ENCODE measurements at regions of chr4 and their contacts with region 1.

Region 1: GRCh38 chr4:153083447-153083947 is 120.7 kb upstream of the TRIM2 start:
- DNase-seq: peak; percentile 80
- H3K4me3 ChIP-seq: no peak overlapping the region
- H3K27ac ChIP-seq: no peak overlapping the region
- H3K4me1 ChIP-seq: peaks cover 4% of the 10 kb centered on the region
- CTCF ChIP-seq: peak; percentile 83

Region 2: DNA sequence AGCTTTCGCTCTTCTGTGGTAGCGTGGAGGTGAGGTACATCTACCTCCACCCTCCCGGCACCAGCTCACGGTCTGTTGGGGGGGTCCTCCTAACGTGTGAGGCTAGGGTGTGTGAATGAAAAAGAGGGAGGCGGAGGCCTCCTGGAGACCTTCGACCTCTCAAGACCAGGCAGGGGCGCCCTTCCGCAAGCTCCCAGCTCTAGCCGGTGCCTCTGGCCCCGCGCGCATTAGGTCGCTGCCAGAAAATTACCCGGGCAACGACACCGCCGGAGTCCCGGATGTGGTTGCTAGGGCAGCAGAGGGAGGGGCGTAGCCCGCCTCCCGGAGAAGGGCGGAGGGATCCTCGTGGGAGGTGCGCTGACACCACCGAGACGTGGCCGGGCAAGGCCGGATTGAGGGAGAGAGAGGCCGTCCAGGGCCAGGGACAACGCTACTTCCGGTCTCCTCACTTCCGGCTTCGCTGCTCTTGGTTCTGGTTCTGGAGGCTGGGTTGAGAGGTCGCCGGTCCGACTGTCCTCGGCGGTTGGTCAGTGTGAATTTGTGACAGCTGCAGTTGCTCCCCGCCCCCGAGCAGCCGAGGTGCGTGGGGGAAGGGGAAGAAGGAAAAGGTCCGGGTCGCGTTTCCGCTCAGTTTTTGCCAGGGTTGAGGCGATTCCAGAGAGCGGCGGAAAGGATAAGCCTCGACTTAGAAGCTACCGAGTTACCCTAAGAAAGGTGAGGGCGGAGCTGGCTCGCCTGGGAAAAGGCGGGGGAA is 303.8 kb before region 1 on chr4 and contains the starts of genes ARFIP1 and TIGD4:
- CTCF ChIA-PET with region 1: interaction called, 3 read pairs
- POLR2A ChIA-PET with region 1: no interaction called
- intact Hi-C with region 1: loop called (anchors 10 kb)
- DNase-seq: peak; percentile 96
- H3K4me3 ChIP-seq: peak within 1 kb of the TSS; percentile 79
- H3K27ac ChIP-seq: peak within 1 kb of the TSS; percentile 31
- H3K4me1 ChIP-seq: peaks cover 44% of the 10 kb centered on the region
- CTCF ChIP-seq: peak; percentile 73
- total RNA-seq, gene ARFIP1: 24.8 and 29.3 TPM in 2 replicates
- total RNA-seq, gene TIGD4: 1.1 and 1.5 TPM in 2 replicates

Region 3: DNA sequence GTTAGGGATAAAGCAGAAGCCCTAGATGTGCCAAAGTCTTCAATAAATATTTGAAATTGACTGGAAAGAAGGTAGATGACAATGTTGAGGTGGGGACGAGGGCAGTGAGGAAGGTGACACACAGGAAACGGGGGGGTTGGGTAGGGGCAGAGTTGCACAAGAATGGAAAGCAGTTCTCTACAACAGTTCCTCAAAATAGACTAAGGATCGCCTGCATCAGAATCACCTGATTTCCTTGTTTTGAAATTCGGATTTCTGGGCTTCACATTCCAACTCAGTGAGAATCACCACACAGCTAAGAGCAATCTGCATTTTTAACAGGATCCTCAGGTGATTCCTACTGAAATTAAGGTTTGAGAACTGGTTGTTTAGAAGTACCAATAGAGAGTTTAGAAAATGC is 233.1 kb before region 1 on chr4:
- CTCF ChIA-PET with region 1: interaction called, 3 read pairs
- POLR2A ChIA-PET with region 1: interaction called, 4 read pairs
- intact Hi-C with region 1: loop called (anchors 1 kb)
- DNase-seq: peak; percentile 71
- H3K4me3 ChIP-seq: peak overlapping the region; percentile 23
- H3K27ac ChIP-seq: peak overlapping the region; percentile 12
- H3K4me1 ChIP-seq: peaks cover 21% of the 10 kb centered on the region
- CTCF ChIP-seq: no peak

Region 4: GRCh38 chr4:153127760-153128494 is 44.4 kb after region 1 on chr4:
- CTCF ChIA-PET with region 1: interaction called, 15 read pairs
- POLR2A ChIA-PET with region 1: interaction called, 5 read pairs
- intact Hi-C with region 1: loop called (anchors 1 kb)
- DNase-seq: peak; percentile 84
- H3K4me3 ChIP-seq: no peak overlapping the region
- H3K27ac ChIP-seq: no peak overlapping the region
- H3K4me1 ChIP-seq: no peaks in the 10 kb centered on the region
- CTCF ChIP-seq: peak; percentile 98

Region 5: GRCh38 chr4:153146031-153146430 is 62.5 kb after region 1 on chr4:
- CTCF ChIA-PET with region 1: no interaction called
- POLR2A ChIA-PET with region 1: no interaction called
- intact Hi-C with region 1: no loop called
- DNase-seq: no peak
- H3K4me3 ChIP-seq: no peak overlapping the region
- H3K27ac ChIP-seq: no peak overlapping the region
- H3K4me1 ChIP-seq: peaks cover 7% of the 10 kb centered on the region
- CTCF ChIP-seq: no peak

Region 6: GRCh38 chr4:153318696-153319320 is 235.3 kb after region 1 on chr4:
- CTCF ChIA-PET with region 1: no interaction called
- POLR2A ChIA-PET with region 1: no interaction called
- intact Hi-C with region 1: loop called (anchors 1 kb)
- DNase-seq: peak; percentile 68
- H3K4me3 ChIP-seq: no peak overlapping the region
- H3K27ac ChIP-seq: no peak overlapping the region
- H3K4me1 ChIP-seq: peaks cover 11% of the 10 kb centered on the region
- CTCF ChIP-seq: peak; percentile 96

Region 7: DNA sequence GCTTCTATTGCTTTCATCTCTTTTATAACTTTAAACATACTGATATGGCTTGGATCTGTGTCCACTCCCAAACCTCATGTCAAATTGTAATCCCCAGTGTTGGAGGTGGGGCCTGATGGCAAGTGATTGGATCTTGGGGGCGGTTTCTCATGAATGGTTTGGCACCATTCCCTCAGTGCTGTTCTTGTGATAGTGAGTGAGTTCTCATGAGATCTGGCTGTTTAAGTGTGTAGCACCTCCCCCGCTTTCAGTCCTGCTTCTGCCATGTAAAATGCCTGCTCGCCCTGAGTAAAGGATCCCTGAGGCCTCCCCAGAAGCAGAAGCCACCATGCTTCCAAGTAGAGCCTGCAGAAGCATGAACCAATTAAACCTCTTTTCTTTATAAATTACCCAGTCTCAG is 278.7 kb after region 1 on chr4:
- CTCF ChIA-PET with region 1: no interaction called
- POLR2A ChIA-PET with region 1: no interaction called
- intact Hi-C with region 1: no loop called
- DNase-seq: no peak
- H3K4me3 ChIP-seq: no peak overlapping the region
- H3K27ac ChIP-seq: no peak overlapping the region
- H3K4me1 ChIP-seq: peaks cover 3% of the 10 kb centered on the region
- CTCF ChIP-seq: no peak

Region 8: DNA sequence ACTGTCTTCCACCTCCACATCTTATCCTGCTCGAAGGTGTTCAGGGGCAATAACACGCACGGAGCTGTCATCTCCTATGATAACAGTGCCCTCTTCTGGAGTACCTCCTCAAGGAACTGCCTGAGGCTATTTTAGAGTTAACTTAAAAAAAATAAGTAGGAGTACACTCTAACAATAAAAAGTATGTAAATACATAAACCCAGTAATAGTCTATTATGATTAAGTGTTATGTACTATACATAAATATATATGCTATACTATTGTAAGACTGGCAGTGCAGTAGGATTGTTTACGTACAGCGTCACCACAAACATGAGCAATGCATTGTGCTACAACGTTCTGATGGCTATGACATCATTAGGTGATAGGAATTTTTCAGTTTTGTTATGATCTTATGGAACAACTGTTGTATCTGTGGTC is 566.1 kb after region 1 on chr4:
- CTCF ChIA-PET with region 1: no interaction called
- POLR2A ChIA-PET with region 1: no interaction called
- intact Hi-C with region 1: loop called (anchors 5 kb)
- DNase-seq: peak; percentile 73
- H3K4me3 ChIP-seq: no peak overlapping the region
- H3K27ac ChIP-seq: no peak overlapping the region
- H3K4me1 ChIP-seq: peaks cover 22% of the 10 kb centered on the region
- CTCF ChIP-seq: peak; percentile 86

Measured in OCI-LY7 (cell line).